ENCODE measurements at regions of chr7 and their contacts with region 1.

Region 1: DNA sequence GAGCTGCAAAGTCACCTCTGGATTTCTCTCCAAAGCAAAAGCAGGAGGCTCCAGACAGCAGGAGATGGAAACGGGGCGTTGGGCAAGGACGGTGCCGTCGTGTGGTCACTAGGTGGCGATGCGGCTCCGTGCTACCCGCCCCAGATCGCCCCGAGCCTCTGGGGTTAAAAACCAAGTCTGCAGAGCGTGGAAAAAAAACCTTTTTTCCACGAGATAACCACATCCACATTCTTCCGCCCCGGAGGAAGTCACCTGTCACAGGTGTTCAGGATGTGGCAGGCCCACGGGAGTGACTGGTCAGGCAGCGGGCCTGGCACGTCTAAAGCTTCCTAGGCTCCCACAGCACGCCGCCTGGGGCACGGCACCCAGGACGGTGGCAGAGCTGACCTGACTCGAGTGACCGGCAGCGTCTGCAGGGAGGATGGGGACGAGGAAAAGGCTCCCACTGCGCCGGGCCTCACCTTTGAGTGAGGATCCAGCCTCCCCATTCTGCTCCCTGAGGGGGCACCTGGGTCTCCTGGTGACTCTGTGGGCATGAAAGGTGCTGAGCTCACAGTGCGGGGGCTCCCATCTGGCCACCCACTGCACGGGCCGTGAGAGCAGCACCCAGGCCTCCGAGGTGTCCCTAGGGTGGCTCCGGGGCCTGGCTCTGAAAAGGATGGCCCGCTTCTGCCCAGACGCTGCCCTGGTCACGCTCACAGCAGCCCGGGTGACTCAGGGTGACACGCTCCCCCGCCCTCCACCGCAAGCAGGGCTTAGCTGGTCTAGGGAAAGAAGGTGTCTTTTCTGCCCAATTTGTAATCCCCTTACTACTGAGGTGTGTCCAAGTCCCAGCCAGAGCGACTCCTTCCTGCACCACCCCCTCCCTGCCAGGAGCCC is 71.3 kb upstream of the TNRC18 start:
- DNase-seq: peak; percentile 84 to 91
- H3K4me3 ChIP-seq: no peak overlapping the region
- H3K4me3 Mint-ChIP-seq: no peak overlapping the region
- H3K27ac Mint-ChIP-seq: no peak overlapping the region
- H3K4me1 ChIP-seq: peaks cover 10% of the 10 kb centered on the region
- H3K4me1 Mint-ChIP-seq: no peaks in the 10 kb centered on the region
- H3K27me3 ChIP-seq: no peaks in the 10 kb centered on the region
- H3K27me3 Mint-ChIP-seq: no peaks in the 10 kb centered on the region
- CTCF ChIP-seq: peak; percentile 96 to 97

Region 2: GRCh38 chr7:5557920-5558401 is 63.0 kb after region 1 on chr7:
- CTCF ChIA-PET with region 1: interaction called, 30 read pairs
- POLR2A ChIA-PET with region 1: no interaction called
- intact Hi-C with region 1: loop called (anchors 1 kb)
- DNase-seq: no peak
- H3K4me3 ChIP-seq: no peak overlapping the region
- H3K4me3 Mint-ChIP-seq: no peak overlapping the region
- H3K27ac Mint-ChIP-seq: peak overlapping the region; percentile 81
- H3K4me1 ChIP-seq: peaks cover 46% of the 10 kb centered on the region
- H3K4me1 Mint-ChIP-seq: peaks cover 13% of the 10 kb centered on the region
- H3K27me3 ChIP-seq: no peaks in the 10 kb centered on the region
- H3K27me3 Mint-ChIP-seq: no peaks in the 10 kb centered on the region
- CTCF ChIP-seq: no peak

Region 3: GRCh38 chr7:5677538-5678294 is 182.8 kb after region 1 on chr7:
- CTCF ChIA-PET with region 1: interaction called, 11 read pairs
- POLR2A ChIA-PET with region 1: no interaction called
- intact Hi-C with region 1: loop called (anchors 1 kb)
- DNase-seq: peak; percentile 64 to 71
- H3K4me3 ChIP-seq: no peak overlapping the region
- H3K4me3 Mint-ChIP-seq: no peak overlapping the region
- H3K27ac Mint-ChIP-seq: no peak overlapping the region
- H3K4me1 ChIP-seq: no peaks in the 10 kb centered on the region
- H3K4me1 Mint-ChIP-seq: peaks cover 13% of the 10 kb centered on the region
- H3K27me3 ChIP-seq: no peaks in the 10 kb centered on the region
- H3K27me3 Mint-ChIP-seq: no peaks in the 10 kb centered on the region
- CTCF ChIP-seq: peak; percentile 65 to 75

Region 4: GRCh38 chr7:5693529-5693928 is 198.6 kb after region 1 on chr7:
- CTCF ChIA-PET with region 1: no interaction called
- POLR2A ChIA-PET with region 1: no interaction called
- intact Hi-C with region 1: no loop called
- DNase-seq: no peak
- H3K4me3 ChIP-seq: no peak overlapping the region
- H3K4me3 Mint-ChIP-seq: no peak overlapping the region
- H3K27ac Mint-ChIP-seq: no peak overlapping the region
- H3K4me1 ChIP-seq: peaks cover 46% of the 10 kb centered on the region
- H3K4me1 Mint-ChIP-seq: peaks cover 26% of the 10 kb centered on the region
- H3K27me3 ChIP-seq: no peaks in the 10 kb centered on the region
- H3K27me3 Mint-ChIP-seq: no peaks in the 10 kb centered on the region
- CTCF ChIP-seq: no peak

Region 5: GRCh38 chr7:5704534-5704922 is 209.6 kb after region 1 on chr7:
- CTCF ChIA-PET with region 1: interaction called, 7 read pairs
- POLR2A ChIA-PET with region 1: no interaction called
- intact Hi-C with region 1: loop called (anchors 1 kb)
- DNase-seq: peak; percentile 64 to 75
- H3K4me3 ChIP-seq: no peak overlapping the region
- H3K4me3 Mint-ChIP-seq: no peak overlapping the region
- H3K27ac Mint-ChIP-seq: peak overlapping the region; percentile 17
- H3K4me1 ChIP-seq: no peaks in the 10 kb centered on the region
- H3K4me1 Mint-ChIP-seq: no peaks in the 10 kb centered on the region
- H3K27me3 ChIP-seq: no peaks in the 10 kb centered on the region
- H3K27me3 Mint-ChIP-seq: no peaks in the 10 kb centered on the region
- CTCF ChIP-seq: peak; percentile 88 to 89

Measured in Caco-2 (cell line).